ENCODE measurements at regions of chr9 and their contacts with region 1.

Region 1: GRCh38 chr9:77099388-77099787 is 77.9 kb upstream of the VPS13A start:
- DNase-seq: no peak
- ATAC-seq: no peak
- H3K4me3 ChIP-seq: no peak overlapping the region
- H3K4me3 Mint-ChIP-seq: no peak overlapping the region
- H3K27ac ChIP-seq: no peak overlapping the region
- H3K27ac Mint-ChIP-seq: no peak overlapping the region
- H3K4me1 ChIP-seq: no peaks in the 10 kb centered on the region
- H3K4me1 Mint-ChIP-seq: no peaks in the 10 kb centered on the region
- H3K27me3 ChIP-seq: peaks cover 0 to 10% of the 10 kb centered on the region in 2 experiments
- H3K27me3 Mint-ChIP-seq: peaks cover 24 to 30% of the 10 kb centered on the region in 2 donors

Region 2: GRCh38 chr9:77072022-77072421 is 27.4 kb before region 1 on chr9:
- CTCF ChIA-PET with region 1: interaction called in 1 of 2 experiments, 19 read pairs
- POLR2A ChIA-PET with region 1: no interaction called
- DNase-seq: no peak
- ATAC-seq: no peak
- H3K4me3 ChIP-seq: no peak overlapping the region
- H3K4me3 Mint-ChIP-seq: no peak overlapping the region
- H3K27ac ChIP-seq: no peak overlapping the region
- H3K27ac Mint-ChIP-seq: no peak overlapping the region
- H3K4me1 ChIP-seq: no peaks in the 10 kb centered on the region
- H3K4me1 Mint-ChIP-seq: no peaks in the 10 kb centered on the region
- H3K27me3 ChIP-seq: no peaks in the 10 kb centered on the region
- H3K27me3 Mint-ChIP-seq: peaks cover 7 to 18% of the 10 kb centered on the region in 2 donors